Activated CD4-positive, alpha-beta memory T cell treated with anti-CD3 and anti-CD28 coated beads for 36 hours (primary cell): ENCODE measurements at regions of chr19 and their contacts with region 1.

Region 1: GRCh38 chr19:57279418-57280066 is 743 bp upstream of the ZNF460 start:
- DNase-seq: peak; percentile 91
- H3K4me3 Mint-ChIP-seq: no peak overlapping the region
- H3K27ac Mint-ChIP-seq: no peak overlapping the region
- H3K4me1 Mint-ChIP-seq: peaks cover 28% of the 10 kb centered on the region
- H3K27me3 Mint-ChIP-seq: no peaks in the 10 kb centered on the region

Region 2: DNA sequence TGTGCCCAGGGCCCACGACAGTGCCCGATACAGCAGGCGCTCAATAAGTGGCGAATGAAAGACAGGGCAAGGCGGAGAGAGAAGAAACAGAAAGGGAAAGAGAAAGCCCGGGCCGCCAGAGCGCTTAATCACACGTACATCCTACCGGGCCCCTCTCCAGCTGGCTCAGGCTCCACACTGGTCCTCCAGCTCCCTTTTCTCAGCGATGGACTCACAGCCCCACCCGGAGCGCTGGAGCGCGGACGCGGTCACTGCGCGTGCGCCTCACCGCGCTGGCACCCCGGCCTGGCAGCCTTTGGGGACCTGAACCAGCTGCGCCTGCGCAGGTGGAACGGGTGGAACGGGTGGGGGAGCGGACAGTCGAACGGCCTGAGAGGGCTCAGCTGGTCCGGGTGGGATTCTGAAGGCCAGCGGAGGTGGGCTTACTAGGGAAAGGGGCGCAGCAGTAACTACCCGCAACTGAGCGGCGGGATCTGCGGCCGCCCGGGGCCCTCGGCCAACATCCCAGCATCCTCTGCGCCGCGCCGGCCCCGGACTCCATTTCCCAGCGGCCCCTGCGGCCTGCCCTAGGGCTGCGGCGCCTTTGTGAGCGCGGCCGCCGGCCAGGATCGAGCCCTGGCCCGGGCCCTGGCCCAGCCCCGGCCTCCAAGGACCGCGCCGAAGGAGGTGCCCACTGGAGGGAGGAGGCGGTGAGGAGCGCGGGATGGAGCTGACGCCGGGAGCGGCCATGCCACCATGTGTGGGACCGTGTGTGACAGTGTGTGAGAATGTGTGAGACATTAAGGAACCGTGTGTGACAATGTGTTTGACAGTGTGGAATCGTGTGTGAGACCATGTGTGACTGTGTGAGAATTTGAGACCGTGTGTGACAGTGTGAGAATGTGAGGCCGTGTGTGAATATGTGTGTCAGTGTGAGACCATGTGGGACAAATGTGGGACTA is 875.5 kb before region 1 on chr19 and contains the start of gene ZNF583:
- CTCF ChIA-PET with region 1: no interaction called
- POLR2A ChIA-PET with region 1: no interaction called
- intact Hi-C with region 1: loop called (anchors 5 kb)
- DNase-seq: peak; percentile 94
- H3K4me3 Mint-ChIP-seq: peak within 1 kb of the TSS; percentile 76
- H3K27ac Mint-ChIP-seq: peak within 1 kb of the TSS; percentile 98
- H3K4me1 Mint-ChIP-seq: peaks cover 27% of the 10 kb centered on the region
- H3K27me3 Mint-ChIP-seq: no peaks in the 10 kb centered on the region
- total RNA-seq, gene ZNF583: 1.6 to 1.8 TPM

Region 3: DNA sequence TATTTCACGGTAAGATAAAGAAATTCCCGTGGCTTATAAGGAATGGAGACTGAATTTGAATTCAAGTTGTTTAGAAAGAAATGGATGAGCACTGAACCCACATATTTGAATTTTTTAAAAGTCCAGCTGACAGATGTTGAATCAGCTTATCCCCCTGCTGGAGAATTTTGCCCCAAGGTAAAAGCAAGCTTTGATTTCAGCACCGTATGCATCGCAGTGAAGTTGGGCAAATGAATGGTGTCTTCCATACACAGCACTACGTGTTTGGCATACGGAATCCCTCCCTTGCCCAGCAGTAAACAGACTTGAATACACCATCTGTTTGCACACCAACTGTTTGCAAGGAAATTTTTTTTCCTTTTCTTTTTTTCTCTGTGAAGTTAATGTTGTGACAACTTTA is 361.5 kb before region 1 on chr19:
- CTCF ChIA-PET with region 1: no interaction called
- POLR2A ChIA-PET with region 1: no interaction called
- intact Hi-C with region 1: no loop called
- DNase-seq: no peak
- H3K4me3 Mint-ChIP-seq: no peak overlapping the region
- H3K27ac Mint-ChIP-seq: no peak overlapping the region
- H3K4me1 Mint-ChIP-seq: no peaks in the 10 kb centered on the region
- H3K27me3 Mint-ChIP-seq: no peaks in the 10 kb centered on the region

Region 4: DNA sequence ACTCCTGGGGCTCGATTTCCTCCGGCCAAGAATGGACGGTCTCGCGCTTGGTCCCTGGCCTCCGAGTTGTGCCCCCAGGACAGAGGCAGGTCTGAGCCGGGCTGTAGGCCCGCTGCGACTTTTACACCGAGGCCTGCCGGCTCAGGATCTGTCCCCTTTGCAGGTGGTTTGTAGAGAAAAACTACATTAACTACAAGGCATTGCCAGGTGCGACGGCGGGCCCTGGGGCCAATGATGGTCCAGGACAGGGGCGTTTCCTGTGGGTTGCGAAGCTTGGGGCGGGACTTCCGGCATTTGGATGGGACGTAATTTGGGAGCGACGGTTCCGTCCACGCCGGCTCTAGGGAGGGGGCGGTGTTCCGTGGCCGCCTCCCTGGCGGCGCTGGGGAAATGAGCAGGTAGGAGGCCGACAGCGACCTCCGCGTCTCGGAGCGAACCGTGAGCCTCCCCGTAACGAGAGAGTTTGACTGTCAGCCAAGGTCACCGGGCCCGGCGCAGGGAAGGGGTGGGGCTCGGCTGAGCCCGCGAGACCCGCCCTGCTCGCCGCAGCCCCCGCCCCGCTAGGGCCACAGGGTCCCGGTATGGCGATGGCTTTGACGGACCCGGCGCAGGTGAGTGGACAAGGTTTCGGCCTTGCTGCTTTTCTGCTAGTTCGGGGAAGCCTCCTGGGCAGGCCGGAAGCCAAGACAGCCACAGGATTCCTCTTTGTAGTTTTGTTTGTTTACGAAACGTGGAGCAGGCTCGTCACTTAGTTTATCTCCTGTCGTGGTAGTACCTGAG is 39.0 kb before region 1 on chr19 and contains the start of gene ZNF805:
- CTCF ChIA-PET with region 1: no interaction called
- POLR2A ChIA-PET with region 1: no interaction called
- intact Hi-C with region 1: loop called (anchors 1 kb)
- DNase-seq: peak; percentile 97
- H3K4me3 Mint-ChIP-seq: peak within 1 kb of the TSS; percentile 90
- H3K27ac Mint-ChIP-seq: peak within 1 kb of the TSS; percentile 89
- H3K4me1 Mint-ChIP-seq: peaks cover 24% of the 10 kb centered on the region
- H3K27me3 Mint-ChIP-seq: no peaks in the 10 kb centered on the region
- total RNA-seq, gene ZNF805: 6.9 to 7.0 TPM

Region 5: DNA sequence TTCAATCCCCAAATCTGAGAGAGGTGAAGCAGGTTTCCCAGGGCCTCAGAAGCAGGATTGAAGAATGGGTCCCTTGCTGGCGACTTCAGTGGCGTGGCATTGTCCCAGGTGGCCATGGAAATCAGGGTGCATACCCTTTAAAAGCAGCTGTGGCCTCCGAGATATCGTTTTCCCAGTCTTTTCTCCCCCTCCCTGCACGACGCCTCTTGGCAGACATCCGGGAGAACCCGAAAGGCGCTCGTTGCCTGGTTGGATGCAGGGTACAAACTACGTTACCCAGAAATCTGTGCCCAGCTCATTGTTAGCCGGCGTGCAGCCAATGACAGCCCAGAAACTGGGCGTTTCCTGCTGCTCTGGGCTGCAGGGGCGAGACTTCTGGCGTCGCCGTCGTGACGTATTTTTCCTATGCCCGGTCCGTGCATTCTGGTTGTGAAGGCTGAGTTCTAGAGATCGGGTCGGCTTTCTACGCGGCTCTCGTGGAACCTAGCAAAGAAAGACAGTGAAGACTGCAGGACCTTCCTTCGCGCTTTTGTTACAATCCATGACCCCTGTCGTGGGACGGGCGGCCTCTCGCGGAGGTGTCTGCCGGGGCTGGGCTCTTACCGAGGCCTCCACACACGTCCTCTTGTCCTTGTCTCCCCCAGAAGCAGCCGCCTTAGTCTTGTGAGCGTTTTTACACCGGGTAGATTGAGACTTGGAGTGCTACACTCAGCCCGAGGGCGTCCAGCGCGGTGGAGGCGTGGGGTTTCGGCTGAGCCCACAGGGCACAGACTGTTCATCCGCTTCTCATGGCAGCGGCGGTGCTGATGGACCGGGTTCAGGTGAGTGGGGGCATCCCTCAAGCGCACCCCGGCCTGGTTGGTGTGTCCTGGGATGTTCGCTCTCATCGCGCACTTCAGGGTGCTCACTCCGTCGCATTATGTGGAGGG is 71.6 kb after region 1 on chr19 and contains the start of gene ZNF304:
- CTCF ChIA-PET with region 1: no interaction called
- POLR2A ChIA-PET with region 1: no interaction called
- intact Hi-C with region 1: loop called (anchors 1 kb)
- DNase-seq: peak; percentile 91
- H3K4me3 Mint-ChIP-seq: peak within 1 kb of the TSS; percentile 90
- H3K27ac Mint-ChIP-seq: peak within 1 kb of the TSS; percentile 68
- H3K4me1 Mint-ChIP-seq: peaks cover 25% of the 10 kb centered on the region
- H3K27me3 Mint-ChIP-seq: peaks cover 5% of the 10 kb centered on the region
- total RNA-seq, gene ZNF304: 3.8 to 4.0 TPM

Region 6: DNA sequence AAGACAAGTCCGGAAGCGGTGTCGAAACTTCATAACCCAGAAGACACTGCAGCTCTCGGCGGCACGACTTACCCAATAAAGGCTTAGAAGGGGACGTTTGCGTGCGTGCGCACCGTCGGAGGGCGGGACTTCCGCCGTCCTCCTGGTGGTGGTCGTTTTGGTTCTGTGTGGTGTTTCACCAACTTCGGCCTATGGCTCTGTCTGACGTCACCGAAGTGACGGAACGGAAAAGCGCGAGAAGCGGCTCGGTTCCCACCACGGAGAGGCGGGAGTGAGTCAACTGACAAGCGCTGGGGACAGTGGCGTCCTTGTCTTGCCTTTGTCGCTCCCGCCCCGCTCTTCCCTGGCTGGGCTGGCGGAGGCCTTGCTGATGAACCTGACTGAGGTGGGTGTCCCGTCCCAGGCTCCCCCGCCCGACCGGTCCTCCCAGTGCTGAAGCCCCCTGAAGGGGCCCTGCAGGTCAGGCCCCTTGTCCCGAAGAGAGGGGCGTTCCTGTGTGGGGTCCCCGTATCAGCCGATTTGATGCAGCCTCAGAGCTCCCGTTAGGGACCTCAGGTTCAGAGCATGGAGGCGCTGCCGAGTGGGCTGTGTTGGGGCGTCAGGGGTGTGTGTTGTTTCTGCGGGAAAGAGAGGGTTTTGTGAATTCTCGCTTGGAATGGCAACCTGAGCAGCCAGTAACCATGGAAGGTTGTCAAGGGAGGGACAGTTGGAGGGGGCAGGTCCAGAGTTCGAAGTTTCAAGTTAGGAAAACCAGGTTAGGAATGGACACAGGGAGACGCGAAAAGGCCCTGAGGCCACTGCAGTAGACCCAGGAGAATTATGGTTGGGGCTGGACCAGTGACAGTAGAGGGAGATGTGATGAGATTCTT is 110.4 kb after region 1 on chr19 and contains the start of gene ZNF548:
- CTCF ChIA-PET with region 1: no interaction called
- POLR2A ChIA-PET with region 1: no interaction called
- intact Hi-C with region 1: loop called (anchors 1 kb)
- DNase-seq: peak; percentile 97
- H3K4me3 Mint-ChIP-seq: peak within 1 kb of the TSS; percentile 96
- H3K27ac Mint-ChIP-seq: peak within 1 kb of the TSS; percentile 94
- H3K4me1 Mint-ChIP-seq: peaks cover 25% of the 10 kb centered on the region
- H3K27me3 Mint-ChIP-seq: no peaks in the 10 kb centered on the region
- total RNA-seq, gene ZNF548: 12.0 to 12.1 TPM

Region 7: GRCh38 chr19:57819475-57820148 is 540.1 kb after region 1 on chr19:
- CTCF ChIA-PET with region 1: no interaction called
- POLR2A ChIA-PET with region 1: no interaction called
- intact Hi-C with region 1: loop called (anchors 5 kb)
- DNase-seq: peak; percentile 89
- H3K4me3 Mint-ChIP-seq: peak overlapping the region; percentile 98
- H3K27ac Mint-ChIP-seq: peak overlapping the region; percentile 95
- H3K4me1 Mint-ChIP-seq: peaks cover 48% of the 10 kb centered on the region
- H3K27me3 Mint-ChIP-seq: no peaks in the 10 kb centered on the region

Region 8: DNA sequence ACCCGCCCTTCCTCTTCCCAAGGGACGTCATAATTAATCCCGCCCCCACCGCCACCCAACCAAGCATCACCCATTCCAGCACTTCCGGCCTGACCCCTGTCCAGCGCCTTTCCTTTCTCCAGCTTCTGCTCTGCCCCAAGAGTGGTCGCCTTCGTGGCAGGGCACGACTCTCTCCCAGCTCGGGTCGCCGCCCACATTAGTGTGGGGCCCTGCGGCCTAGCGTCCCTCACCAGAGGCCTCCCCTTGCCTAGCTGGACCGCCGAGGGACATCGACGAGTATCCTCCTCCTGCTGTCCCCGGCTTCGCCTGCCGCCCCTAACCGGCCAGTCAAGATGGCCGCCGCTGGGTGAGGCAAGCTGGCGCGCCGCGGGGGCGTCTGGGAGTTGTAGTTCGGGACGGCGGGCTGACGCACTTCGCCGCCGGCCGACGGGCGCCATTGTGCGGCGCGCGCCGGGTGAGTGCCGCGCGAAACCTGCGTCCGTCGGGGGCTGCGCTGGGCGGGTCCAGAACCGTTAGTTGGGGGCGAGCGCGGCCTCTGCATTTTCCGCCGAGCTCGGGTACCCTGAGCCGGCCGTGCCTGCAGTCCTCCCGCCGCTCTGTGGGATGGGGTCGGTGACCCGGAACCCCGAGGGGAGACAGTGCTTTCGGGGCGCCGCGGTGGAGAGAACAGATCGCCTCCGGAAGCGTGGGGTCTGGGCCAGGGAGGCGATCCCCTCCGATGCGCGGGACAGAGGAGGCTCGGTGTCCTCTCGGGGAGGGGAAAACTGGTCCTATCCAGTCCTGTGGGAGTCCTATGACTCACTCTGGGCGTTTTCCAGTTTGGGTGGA is 903.7 kb after region 1 on chr19 and contains the start of gene ZNF274:
- CTCF ChIA-PET with region 1: no interaction called
- POLR2A ChIA-PET with region 1: no interaction called
- intact Hi-C with region 1: loop called (anchors 10 kb)
- DNase-seq: peak; percentile 95
- H3K4me3 Mint-ChIP-seq: peak within 1 kb of the TSS; percentile 92
- H3K27ac Mint-ChIP-seq: peak within 1 kb of the TSS; percentile 99
- H3K4me1 Mint-ChIP-seq: peaks cover 16% of the 10 kb centered on the region
- H3K27me3 Mint-ChIP-seq: no peaks in the 10 kb centered on the region
- total RNA-seq, gene ZNF274: 19.1 to 19.6 TPM